Endothelial cell of umbilical vein (primary cell): ENCODE measurements at regions of chr9 and their contacts with region 1.

Region 1: DNA sequence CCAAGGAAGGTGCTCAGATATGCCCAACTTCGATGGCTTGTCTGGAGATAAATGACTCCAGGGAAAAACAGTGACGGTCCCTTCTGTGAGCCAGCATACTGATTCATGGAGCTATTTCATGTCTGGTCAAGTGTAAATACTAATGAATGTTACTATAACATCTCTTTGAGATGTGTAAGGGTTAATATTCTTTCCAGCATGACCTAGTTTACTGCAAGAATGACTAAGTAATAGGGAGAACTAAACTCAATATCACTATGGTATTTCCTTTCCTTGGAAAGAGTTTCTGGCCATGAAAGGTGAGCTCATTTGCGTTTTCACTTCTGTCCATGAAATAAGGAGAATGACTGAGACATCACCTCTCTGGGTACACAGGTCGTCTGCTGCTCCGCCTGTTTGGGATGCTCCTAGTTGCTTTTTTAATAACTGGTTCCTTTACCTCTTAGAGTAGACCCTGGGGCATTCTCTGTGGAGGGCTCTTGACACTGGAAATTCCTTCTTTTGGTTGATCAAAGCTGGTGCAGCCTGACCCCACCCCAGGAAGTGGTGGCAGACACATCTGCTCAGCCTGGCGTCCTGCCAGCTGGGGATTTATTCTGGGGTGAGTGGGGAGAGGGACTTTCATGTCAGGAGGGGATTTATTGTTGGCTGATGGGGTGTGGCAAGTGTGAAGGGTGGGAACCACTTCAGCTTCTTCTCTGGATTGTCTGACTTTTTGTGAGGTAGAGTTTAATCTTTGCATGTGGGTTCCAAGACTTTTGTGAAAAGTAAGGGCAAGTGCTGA is 250.0 kb upstream of the MPDZ start:
- DNase-seq: no peak
- H3K4me3 ChIP-seq: no peak overlapping the region
- H3K27ac ChIP-seq: no peak overlapping the region
- H3K4me1 ChIP-seq: peaks cover 14% of the 10 kb centered on the region
- H3K27me3 ChIP-seq: no peaks in the 10 kb centered on the region
- CTCF ChIP-seq: no peak
- POLR2A ChIP-seq: no peak

Region 2: DNA sequence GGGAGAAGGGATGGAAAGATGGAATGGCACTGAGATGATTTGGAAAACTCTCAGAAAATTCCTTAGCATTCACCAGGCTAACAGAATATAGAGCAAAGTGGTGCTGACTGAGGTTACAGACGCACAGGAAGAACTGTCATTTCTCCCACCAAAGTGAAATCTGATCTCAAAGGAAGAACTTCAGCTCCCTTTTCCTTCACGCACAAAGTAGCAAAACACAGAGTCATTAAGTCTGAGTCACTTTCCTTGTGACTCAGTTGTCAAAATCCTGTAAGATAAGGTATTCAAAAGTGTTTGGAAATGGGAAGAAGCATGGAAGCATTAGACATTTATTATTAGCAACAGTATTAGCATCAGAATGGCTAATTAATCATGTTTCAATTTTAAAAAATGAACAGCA is 261.8 kb before region 1 on chr9:
- CTCF ChIA-PET with region 1: no interaction called
- POLR2A ChIA-PET with region 1: no interaction called
- dilution Hi-C with region 1: no loop called
- intact Hi-C with region 1: loop called (anchors 5 kb)
- DNase-seq: peak; percentile 97
- H3K4me3 ChIP-seq: peak overlapping the region in 1 of 3 experiments; percentile 48
- H3K27ac ChIP-seq: peak overlapping the region; percentile 88
- H3K4me1 ChIP-seq: peaks cover 62% of the 10 kb centered on the region
- H3K27me3 ChIP-seq: no peaks in the 10 kb centered on the region
- CTCF ChIP-seq: no peak
- POLR2A ChIP-seq: peak; percentile 69

Region 3: DNA sequence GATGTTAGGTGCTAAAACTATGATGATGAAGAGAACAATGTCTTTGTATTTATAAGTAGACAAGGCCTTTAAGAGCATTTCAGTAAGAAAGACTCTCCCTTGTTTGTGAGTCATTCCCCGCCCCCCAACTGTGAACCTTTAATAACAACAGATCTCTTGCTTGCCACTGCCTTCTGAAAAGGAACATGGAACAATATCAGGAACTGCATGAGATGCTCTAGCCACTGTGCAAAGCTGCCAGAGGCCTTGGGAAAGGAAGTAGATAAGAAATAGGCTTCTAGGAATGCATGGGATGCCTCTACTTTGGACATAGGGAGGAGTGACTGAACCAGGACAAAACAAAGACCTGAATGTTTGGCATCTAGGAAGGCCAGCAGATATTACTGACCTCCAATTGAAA is 46.0 kb after region 1 on chr9:
- CTCF ChIA-PET with region 1: no interaction called
- POLR2A ChIA-PET with region 1: no interaction called
- dilution Hi-C with region 1: no loop called
- intact Hi-C with region 1: loop called (anchors 2 kb)
- DNase-seq: peak; percentile 95
- H3K4me3 ChIP-seq: no peak overlapping the region
- H3K27ac ChIP-seq: peak overlapping the region; percentile 89
- H3K4me1 ChIP-seq: peaks cover 23% of the 10 kb centered on the region
- H3K27me3 ChIP-seq: no peaks in the 10 kb centered on the region
- CTCF ChIP-seq: no peak
- POLR2A ChIP-seq: no peak

Region 4: DNA sequence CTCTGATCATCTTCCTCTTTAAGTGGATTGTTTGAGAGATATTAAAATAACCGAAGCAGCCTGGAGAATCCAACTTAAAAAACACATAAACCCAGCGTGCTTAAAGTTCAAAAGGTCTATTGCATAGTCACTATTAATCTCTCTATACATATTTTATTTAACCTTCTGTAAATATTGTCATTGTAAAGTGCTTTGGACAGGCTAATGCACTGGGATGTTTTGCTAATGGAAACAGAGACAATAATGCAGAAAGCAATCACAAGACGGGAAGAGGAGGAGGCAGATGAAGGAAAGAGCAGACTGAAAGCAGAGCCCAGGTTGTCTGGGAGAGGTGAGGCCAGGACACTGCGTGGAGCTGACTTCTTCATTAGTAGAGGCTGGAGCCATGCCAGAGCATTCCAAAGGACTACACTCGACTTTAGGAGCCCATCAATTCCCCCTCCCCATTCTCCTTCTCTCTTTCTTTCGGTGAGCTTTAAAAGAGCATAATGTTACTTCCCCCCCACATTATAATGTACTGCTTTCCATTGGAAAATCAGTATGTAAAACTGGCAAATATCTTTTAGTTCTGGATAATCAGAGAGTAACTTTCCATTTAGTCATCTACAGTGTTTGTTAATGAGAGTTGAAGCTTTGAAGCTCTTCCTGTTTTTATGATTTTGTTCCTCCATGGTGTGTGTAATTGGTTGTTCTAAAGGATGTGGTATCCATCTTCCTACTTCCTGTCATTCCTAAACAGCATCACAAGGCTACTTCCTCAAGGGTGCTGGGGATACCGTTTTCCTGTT is 57.3 kb after region 1 on chr9:
- CTCF ChIA-PET with region 1: no interaction called
- POLR2A ChIA-PET with region 1: no interaction called
- dilution Hi-C with region 1: no loop called
- intact Hi-C with region 1: loop called (anchors 2 kb)
- DNase-seq: peak; percentile 75
- H3K4me3 ChIP-seq: no peak overlapping the region
- H3K27ac ChIP-seq: peak overlapping the region; percentile 38
- H3K4me1 ChIP-seq: peaks cover 27% of the 10 kb centered on the region
- H3K27me3 ChIP-seq: no peaks in the 10 kb centered on the region
- CTCF ChIP-seq: no peak
- POLR2A ChIP-seq: no peak

Region 5: DNA sequence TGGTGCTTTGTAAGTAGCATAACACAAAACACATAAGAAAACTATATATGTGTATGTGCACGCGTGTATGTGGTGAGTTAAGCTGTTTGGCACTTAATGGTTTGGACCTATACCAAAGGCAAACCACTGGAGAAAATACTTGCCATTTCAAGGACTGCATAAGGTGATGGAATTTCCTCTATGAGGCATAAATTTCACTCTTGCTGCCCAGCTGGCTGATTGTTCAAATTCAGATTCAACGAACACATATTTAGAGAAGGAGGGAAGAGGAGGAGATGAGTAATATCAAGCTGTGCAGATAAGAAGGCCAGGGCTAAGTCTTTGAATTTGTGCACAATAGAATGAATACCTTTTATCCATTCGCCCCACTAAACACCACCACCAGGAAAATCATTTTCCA is 220.5 kb after region 1 on chr9:
- CTCF ChIA-PET with region 1: no interaction called
- POLR2A ChIA-PET with region 1: no interaction called
- dilution Hi-C with region 1: no loop called
- intact Hi-C with region 1: loop called (anchors 1 kb)
- DNase-seq: peak; percentile 96
- H3K4me3 ChIP-seq: no peak overlapping the region
- H3K27ac ChIP-seq: peak overlapping the region; percentile 72
- H3K4me1 ChIP-seq: peaks cover 17% of the 10 kb centered on the region
- H3K27me3 ChIP-seq: no peaks in the 10 kb centered on the region
- CTCF ChIP-seq: no peak
- POLR2A ChIP-seq: peak; percentile 49